ENCODE measurements at regions of chr16 and their contacts with region 1.

Region 1: DNA sequence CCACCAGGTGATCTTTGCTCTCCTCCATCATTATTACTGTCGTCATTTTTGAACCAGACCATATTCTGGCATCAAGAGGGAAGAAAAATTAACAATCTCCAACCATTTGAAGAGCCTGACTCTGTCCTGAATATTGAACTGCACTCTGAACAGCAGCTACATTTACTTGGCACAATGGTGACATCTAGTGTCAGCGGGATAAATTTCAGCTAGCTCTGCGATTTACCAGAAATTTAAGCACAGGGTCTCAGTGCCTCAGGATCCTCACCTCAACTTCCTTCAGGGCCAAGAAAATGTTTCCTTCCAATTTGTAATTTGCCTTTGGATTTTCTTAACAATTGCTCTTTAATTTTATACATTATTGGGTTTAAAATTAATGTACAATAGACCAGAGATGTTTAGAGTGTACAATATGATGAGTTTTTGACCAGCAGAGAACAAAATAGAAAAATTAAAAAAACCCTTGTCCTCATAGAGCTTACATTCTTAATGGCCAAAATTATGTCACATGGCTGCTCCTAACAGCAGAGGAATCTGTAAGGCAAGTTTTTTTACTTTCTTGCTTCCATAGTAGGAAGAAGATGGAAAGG is 10.7 kb upstream of the ZNF19 start:
- DNase-seq: peak; percentile 51
- H3K4me3 ChIP-seq: no peak overlapping the region
- H3K27ac ChIP-seq: no peak overlapping the region
- H3K4me1 ChIP-seq: no peaks in the 10 kb centered on the region
- H3K27me3 ChIP-seq: no peaks in the 10 kb centered on the region
- CTCF ChIP-seq: peak; percentile 16 to 66 (median 63)
- POLR2A ChIP-seq: no peak

Region 2: DNA sequence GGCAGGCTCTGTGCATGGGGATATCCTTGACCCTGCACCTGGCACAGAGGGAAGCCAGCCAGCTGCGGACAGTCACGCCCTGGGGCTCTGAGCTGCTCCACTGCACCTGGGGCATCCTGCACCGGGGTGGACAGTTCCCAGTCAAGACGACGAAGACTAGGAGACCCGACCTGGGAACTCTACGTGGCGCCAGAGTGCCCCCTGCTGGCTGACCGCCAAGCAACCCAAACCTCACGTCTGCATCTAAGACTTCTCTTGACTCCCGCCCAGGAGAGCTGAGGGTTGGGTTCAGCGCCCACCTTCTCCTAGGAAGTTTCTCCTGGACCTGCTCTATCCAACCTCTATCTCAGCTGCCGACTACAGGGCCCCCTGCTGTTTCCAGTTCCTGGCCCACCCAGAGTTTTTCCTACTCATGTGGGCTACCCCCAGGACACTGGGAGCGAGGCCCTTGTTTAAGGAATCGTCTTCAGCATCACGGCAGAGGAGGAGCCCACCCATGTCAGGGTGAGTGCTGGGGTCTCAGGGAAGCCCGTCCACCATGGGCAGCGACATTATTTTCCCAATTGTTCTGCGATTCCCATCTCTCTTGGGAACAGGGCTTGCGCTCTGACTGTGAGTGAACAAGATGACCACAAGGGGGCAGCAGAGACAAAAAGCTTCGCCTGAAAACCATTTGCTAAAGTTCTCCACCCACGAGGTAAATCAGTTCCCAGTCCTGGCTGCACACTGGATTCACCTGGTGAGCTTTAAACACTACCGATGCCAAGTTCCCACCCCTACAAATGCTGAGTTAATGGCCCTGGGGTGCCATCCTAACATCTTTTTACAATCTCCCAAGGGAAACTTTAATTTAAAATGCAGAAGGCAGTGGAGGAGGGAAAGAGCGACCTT is 87.4 kb before region 1 on chr16:
- intact Hi-C with region 1: loop called (anchors 10 kb)
- DNase-seq: peak; percentile 80
- H3K4me3 ChIP-seq: peak overlapping the region in 1 of 2 donors; percentile 15
- H3K27ac ChIP-seq: no peak overlapping the region
- H3K4me1 ChIP-seq: peaks cover 5% of the 10 kb centered on the region
- H3K27me3 ChIP-seq: no peaks in the 10 kb centered on the region
- CTCF ChIP-seq: peak; percentile 77 to 92 (median 81)
- POLR2A ChIP-seq: no peak

Region 3: GRCh38 chr16:71894921-71895678 is 395.2 kb after region 1 on chr16 and contains the start of gene IST1:
- intact Hi-C with region 1: no loop called
- DNase-seq: peak; percentile 99
- H3K4me3 ChIP-seq: peak within 1 kb of the TSS; percentile 86 to 97
- H3K27ac ChIP-seq: peak within 1 kb of the TSS; percentile 98
- H3K4me1 ChIP-seq: peaks cover 29% of the 10 kb centered on the region
- H3K27me3 ChIP-seq: no peaks in the 10 kb centered on the region
- CTCF ChIP-seq: no peak
- POLR2A ChIP-seq: peak; percentile 48
- total RNA-seq, gene IST1: 301 to 306 TPM

Measured in testis (tissue), 5 donors.